Lower leg skin (tissue), 4 donors: ENCODE measurements at regions of chr16 and their contacts with region 1.

Region 1: DNA sequence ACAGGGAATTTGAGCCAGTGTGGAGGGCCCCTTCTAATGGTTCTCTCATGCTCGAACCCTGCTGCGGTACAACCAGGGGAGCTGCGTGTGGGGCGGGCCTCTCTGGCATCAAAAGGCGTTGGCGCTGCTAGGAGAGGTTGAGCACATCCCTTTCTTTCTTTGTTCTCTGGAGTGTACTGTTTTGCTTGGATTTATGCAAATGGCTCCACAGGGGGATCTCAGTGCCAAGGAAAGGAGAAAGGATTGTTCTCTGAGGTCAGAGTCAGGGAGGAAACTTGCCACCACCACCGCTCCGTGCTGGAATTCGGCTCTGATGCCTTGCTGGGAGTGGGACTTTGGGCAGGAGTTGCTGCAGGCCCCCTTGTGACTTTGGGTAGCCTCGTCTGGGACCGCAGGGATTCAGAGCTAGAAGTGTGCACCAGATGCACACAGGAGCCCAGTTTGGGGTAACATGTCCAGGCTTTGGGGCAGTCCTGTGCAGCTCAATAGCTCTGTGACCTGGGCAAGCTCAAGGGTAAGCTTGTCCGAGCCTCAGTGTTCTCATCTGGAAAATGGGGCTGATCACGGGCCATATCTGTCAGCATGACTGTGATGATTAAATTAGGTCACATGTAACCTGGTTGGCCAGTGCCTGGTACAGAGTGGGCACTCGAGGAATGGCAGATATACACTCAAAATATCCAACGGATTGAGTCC is 353.0 kb upstream of the EEF2KMT start:
- DNase-seq: peak in 1 of 2 donors; percentile 67
- H3K4me3 ChIP-seq: no peak overlapping the region
- CTCF ChIP-seq: no peak
- POLR2A ChIP-seq: no peak

Region 2: DNA sequence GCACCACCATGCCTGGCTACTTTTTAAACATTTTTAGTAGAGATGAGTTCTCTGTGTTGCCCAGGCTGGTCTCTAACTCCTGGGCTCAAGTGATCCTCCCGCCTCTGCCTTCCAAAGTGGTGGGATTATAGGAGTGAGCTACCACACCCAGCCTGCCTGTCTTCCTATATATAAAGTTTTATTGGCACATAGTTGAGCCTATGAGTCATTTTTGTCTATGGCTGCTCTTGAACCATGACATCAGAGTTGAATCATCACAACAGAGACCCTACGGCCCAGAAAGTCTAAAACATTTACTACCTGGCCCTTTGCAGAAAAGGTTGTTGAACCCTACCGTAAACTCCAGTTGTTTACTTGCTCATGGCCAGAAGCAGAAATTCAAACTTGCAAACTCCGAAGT is 670.3 kb before region 1 on chr16:
- intact Hi-C with region 1: no loop called
- DNase-seq: no peak
- H3K4me3 ChIP-seq: no peak overlapping the region
- CTCF ChIP-seq: no peak
- POLR2A ChIP-seq: no peak

Region 3: GRCh38 chr16:6988846-6989245 is 1538.3 kb after region 1 on chr16:
- intact Hi-C with region 1: loop called (anchors 10 kb)
- DNase-seq: no peak
- H3K4me3 ChIP-seq: no peak overlapping the region
- CTCF ChIP-seq: no peak
- POLR2A ChIP-seq: no peak